Esophagus muscularis mucosa (tissue), 4 donors: ENCODE measurements at regions of chr14 and their contacts with region 1.

Region 1: GRCh38 chr14:73058224-73058921 is at the start of gene RBM25:
- DNase-seq: peak; percentile 99
- H3K4me3 ChIP-seq: peak within 1 kb of the TSS; percentile 76 to 94 (median 86)
- H3K27ac ChIP-seq: peak within 1 kb of the TSS; percentile 92 to 97 (median 94)
- H3K4me1 ChIP-seq: peaks cover 43 to 51% (median 48%) of the 10 kb centered on the region in 4 donors
- H3K27me3 ChIP-seq: no peaks in the 10 kb centered on the region
- CTCF ChIP-seq: peak in 1 of 3 experiments; percentile 14
- EP300 ChIP-seq: no peak
- POLR2A ChIP-seq: peak; percentile 92
- total RNA-seq, gene RBM25: 25.6 to 44.0 (median 35.1) TPM

Region 2: GRCh38 chr14:73026845-73027542 is 31.4 kb before region 1 on chr14 and contains the start of gene ZFYVE1:
- intact Hi-C with region 1: loop called (anchors 2 kb)
- DNase-seq: peak; percentile 98
- H3K4me3 ChIP-seq: peak within 1 kb of the TSS; percentile 71 to 88 (median 82)
- H3K27ac ChIP-seq: peak within 1 kb of the TSS; percentile 87 to 91 (median 90)
- H3K4me1 ChIP-seq: peaks cover 30 to 46% (median 45%) of the 10 kb centered on the region in 4 donors
- H3K27me3 ChIP-seq: no peaks in the 10 kb centered on the region
- CTCF ChIP-seq: peak in 1 of 3 experiments; percentile 27
- EP300 ChIP-seq: no peak
- POLR2A ChIP-seq: peak; percentile 61
- total RNA-seq, gene ZFYVE1: 18.4 to 26.6 (median 24.1) TPM